ENCODE measurements at regions of chr1 and their contacts with region 1.

Region 1: DNA sequence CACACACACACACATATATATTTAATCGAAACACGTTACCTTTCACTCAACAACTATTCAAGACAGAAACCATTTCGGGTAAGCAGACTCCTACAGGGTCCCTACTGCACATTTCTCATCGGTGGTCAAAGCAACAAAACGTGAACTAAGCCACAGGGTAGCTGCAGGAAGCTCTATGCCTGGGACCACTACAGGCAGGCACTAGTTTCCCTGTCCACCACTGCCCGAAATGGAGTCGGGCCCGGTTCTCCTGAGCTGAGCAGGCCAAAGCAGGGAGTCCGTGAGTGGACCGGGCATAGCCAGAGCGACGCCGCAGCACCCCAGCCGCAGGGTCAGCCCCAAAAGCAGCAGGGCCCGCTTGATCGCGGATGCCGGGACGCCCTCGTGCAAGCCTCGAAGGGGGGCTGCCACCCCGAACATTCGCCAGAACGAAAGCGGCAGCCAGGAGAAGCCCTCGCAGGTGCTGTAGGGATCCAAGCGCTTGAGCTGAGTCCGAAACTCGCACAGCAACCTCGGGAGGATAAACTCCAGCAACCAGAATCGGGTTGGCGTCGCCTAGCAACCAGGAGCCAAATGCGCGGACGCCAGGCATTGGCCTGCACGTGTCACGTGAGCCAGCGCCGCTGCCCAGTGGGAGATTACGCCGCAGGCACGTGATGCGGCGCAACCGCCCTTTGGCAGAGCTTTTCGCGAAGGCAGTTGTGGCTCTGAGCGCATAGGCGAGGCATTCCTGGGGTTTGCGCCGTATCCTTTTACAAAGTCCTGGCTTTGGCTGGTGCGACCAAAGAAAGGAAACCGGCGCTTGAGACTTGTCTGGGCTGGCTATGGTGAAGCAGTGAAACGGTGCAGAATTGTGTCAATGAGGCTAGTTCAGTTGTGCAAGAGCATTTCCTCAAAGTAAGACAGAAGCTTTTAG is 13.9 kb upstream of the DDI2 start:
- DNase-seq: peak; percentile 85 to 98 (median 90)
- ATAC-seq: peak; percentile 98
- H3K4me3 ChIP-seq: peak overlapping the region; percentile 95
- H3K4me3 Mint-ChIP-seq: peak overlapping the region; percentile 65
- H3K27ac ChIP-seq: peak overlapping the region; percentile 47 to 49
- H3K27ac Mint-ChIP-seq: peak overlapping the region; percentile 80
- H3K4me1 ChIP-seq: peaks cover 15% of the 10 kb centered on the region
- H3K4me1 Mint-ChIP-seq: peaks cover 13% of the 10 kb centered on the region
- H3K27me3 ChIP-seq: no peaks in the 10 kb centered on the region
- H3K27me3 Mint-ChIP-seq: no peaks in the 10 kb centered on the region
- CTCF ChIP-seq: no peak

Region 2: GRCh38 chr1:15283526-15283925 is 319.8 kb before region 1 on chr1:
- CTCF ChIA-PET with region 1: no interaction called
- POLR2A ChIA-PET with region 1: no interaction called
- intact Hi-C with region 1: no loop called
- DNase-seq: no peak
- ATAC-seq: no peak
- H3K4me3 ChIP-seq: no peak overlapping the region
- H3K4me3 Mint-ChIP-seq: no peak overlapping the region
- H3K27ac ChIP-seq: no peak overlapping the region
- H3K27ac Mint-ChIP-seq: no peak overlapping the region
- H3K4me1 ChIP-seq: no peaks in the 10 kb centered on the region
- H3K4me1 Mint-ChIP-seq: no peaks in the 10 kb centered on the region
- H3K27me3 ChIP-seq: peaks cover 0 to 3% of the 10 kb centered on the region in 2 experiments
- H3K27me3 Mint-ChIP-seq: peaks cover 7% of the 10 kb centered on the region
- CTCF ChIP-seq: no peak

Region 3: DNA sequence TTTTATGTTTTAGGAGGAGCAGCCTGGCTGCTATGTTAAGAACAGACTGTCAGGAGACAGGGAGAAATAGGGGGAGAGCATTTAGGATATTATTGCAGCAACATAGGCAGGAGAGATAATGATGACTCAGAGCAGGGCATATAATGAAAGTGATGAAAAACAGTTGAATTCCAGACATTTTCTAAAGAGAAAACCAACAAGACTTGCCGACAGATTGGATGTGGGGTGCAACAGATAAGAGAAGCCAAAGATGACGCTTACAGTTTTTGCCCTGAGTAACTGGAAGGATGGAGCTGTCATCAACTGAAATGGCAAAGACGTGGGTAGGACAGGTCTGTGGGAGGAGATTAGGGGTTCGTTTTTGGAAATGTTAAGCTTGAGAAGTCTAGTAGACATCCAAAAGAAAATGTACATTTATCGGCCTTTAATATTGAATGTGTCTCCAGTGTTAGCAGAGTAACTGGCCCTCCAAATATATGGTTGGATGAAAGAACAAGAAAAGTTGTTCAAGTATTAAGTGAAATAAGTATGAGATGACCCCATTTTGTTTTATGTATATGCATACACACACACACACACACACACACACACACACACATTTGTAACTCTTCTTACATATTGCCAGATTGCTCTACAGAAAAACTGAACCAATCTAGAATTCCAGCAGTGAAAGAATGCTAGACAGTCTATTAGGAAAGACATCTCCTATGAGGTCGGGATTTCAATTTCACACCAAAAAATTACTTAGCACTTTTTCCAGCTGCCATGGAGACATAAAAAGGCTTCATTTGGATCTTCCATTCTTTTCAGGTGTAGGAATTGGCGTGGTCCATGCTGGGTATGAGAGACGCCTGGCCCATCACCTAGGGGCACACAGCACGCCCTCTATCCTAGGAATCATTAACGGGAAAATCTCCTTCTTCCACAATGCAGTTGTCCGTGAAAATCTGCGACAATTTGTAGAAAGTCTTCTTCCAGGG is 59.4 kb before region 1 on chr1:
- CTCF ChIA-PET with region 1: no interaction called
- POLR2A ChIA-PET with region 1: no interaction called
- intact Hi-C with region 1: no loop called
- DNase-seq: no peak
- ATAC-seq: no peak
- H3K4me3 ChIP-seq: no peak overlapping the region
- H3K4me3 Mint-ChIP-seq: no peak overlapping the region
- H3K27ac ChIP-seq: no peak overlapping the region
- H3K27ac Mint-ChIP-seq: peak overlapping the region; percentile 28
- H3K4me1 ChIP-seq: no peaks in the 10 kb centered on the region
- H3K4me1 Mint-ChIP-seq: peaks cover under 1% of the 10 kb centered on the region
- H3K27me3 ChIP-seq: no peaks in the 10 kb centered on the region
- H3K27me3 Mint-ChIP-seq: no peaks in the 10 kb centered on the region
- CTCF ChIP-seq: no peak

Region 4: DNA sequence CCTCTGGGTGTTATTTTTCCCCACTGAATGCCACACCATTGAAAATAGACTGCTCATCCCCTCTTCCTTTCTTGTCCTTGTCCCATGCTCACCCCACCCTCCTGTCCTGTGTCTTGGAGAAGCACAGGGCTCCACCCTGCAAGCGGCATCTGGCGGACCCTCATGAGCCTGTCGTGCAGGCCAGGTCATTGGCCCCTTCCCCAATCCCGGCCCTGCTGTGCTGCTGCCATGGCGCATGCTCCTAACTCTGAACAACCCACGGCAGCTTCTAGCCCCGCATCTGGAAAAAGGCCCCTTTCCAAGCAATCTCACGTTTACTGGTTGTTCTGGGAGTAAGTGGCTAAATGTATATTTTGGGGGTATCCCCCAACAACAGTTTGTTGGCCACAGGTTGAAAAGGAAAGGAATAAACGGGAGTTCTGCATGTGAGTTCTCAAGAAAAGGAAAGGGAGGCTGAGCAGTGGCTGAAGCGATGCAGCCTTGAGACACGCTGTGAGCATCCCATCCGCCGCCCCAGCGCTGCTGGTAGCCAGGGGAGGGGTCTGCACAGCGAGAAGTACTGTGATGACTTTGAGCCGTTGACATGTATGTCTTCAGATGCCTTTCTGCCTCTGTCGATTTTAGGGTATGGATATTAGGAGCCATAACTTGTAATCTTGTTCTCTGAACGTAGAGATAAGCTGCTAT is 34.8 kb before region 1 on chr1:
- CTCF ChIA-PET with region 1: no interaction called
- POLR2A ChIA-PET with region 1: no interaction called
- intact Hi-C with region 1: no loop called
- DNase-seq: no peak
- ATAC-seq: no peak
- H3K4me3 ChIP-seq: no peak overlapping the region
- H3K4me3 Mint-ChIP-seq: no peak overlapping the region
- H3K27ac ChIP-seq: no peak overlapping the region
- H3K27ac Mint-ChIP-seq: peak overlapping the region; percentile 17
- H3K4me1 ChIP-seq: no peaks in the 10 kb centered on the region
- H3K4me1 Mint-ChIP-seq: peaks cover 11% of the 10 kb centered on the region
- H3K27me3 ChIP-seq: no peaks in the 10 kb centered on the region
- H3K27me3 Mint-ChIP-seq: no peaks in the 10 kb centered on the region
- CTCF ChIP-seq: no peak

Region 5: DNA sequence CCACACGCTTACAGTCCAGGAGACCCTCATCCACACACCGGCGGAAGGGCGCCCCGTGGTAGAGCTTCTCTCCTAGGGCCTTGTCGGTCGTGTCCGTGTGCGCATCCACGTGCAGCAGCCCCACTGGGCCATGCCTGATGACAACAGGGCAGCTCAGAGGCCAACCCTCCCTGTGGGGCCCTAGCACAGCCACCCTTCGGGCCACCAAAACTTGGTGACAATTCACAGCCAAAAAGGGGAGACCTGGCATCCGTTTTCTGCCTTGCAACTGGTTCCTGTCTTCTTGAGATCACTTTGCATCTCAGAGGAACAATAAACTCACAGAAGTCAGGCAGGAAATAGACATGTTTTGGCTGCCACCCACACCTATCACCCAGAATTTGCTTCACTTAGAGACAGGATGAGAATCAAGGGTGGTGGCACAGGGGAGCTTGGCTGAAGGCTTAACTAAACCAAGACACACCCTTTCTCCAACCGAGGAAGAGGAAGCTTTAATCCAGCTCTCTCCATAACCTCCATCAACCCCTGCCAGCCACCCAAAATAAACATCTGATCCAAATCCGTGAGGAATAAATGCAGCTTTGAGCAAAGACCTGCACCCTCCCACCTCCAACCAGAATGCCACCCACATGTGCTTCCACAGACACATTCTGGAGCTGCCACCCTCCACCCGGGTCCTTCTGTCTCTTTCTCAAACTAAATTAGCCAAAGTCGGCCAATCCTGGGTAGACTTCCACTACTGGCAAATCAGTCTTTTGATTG is 24.2 kb before region 1 on chr1:
- CTCF ChIA-PET with region 1: interaction called, 5 read pairs
- POLR2A ChIA-PET with region 1: interaction called, 34 read pairs
- intact Hi-C with region 1: no loop called
- DNase-seq: peak in 13 of 14 experiments; percentile 13 to 81 (median 48)
- ATAC-seq: peak; percentile 92
- H3K4me3 ChIP-seq: no peak overlapping the region
- H3K4me3 Mint-ChIP-seq: peak overlapping the region; percentile 67
- H3K27ac ChIP-seq: peak overlapping the region; percentile 64
- H3K27ac Mint-ChIP-seq: peak overlapping the region; percentile 97
- H3K4me1 ChIP-seq: peaks cover 58% of the 10 kb centered on the region
- H3K4me1 Mint-ChIP-seq: peaks cover 55% of the 10 kb centered on the region
- H3K27me3 ChIP-seq: no peaks in the 10 kb centered on the region
- H3K27me3 Mint-ChIP-seq: no peaks in the 10 kb centered on the region
- CTCF ChIP-seq: no peak

Region 6: DNA sequence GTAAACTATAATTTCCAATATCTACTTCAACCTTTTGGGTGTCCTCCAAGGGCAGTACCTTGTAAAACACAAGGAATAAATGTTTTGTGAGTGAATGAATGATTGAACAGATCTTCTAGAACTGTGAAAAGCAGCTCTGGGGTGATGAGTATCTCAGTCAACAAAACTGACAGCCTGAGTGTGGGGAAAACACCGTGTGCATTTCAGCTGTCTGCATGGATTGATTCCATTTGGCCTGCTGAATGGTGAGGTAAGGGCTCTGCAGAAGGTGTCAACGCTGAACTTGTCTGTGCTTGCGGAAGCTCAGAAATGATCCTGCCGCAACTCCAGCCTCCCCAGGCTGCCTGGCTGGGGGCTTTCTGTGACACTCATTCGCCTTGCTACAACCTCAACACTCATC is 11.0 kb before region 1 on chr1:
- CTCF ChIA-PET with region 1: no interaction called
- POLR2A ChIA-PET with region 1: interaction called, 12 read pairs
- intact Hi-C with region 1: no loop called
- DNase-seq: no peak
- ATAC-seq: no peak
- H3K4me3 ChIP-seq: no peak overlapping the region
- H3K4me3 Mint-ChIP-seq: no peak overlapping the region
- H3K27ac ChIP-seq: no peak overlapping the region
- H3K27ac Mint-ChIP-seq: no peak overlapping the region
- H3K4me1 ChIP-seq: no peaks in the 10 kb centered on the region
- H3K4me1 Mint-ChIP-seq: peaks cover 2% of the 10 kb centered on the region
- H3K27me3 ChIP-seq: no peaks in the 10 kb centered on the region
- H3K27me3 Mint-ChIP-seq: no peaks in the 10 kb centered on the region
- CTCF ChIP-seq: no peak

Region 7: GRCh38 chr1:15760520-15761211 is 157.4 kb after region 1 on chr1:
- CTCF ChIA-PET with region 1: no interaction called
- POLR2A ChIA-PET with region 1: no interaction called
- intact Hi-C with region 1: no loop called
- DNase-seq: no peak
- ATAC-seq: no peak
- H3K4me3 ChIP-seq: no peak overlapping the region
- H3K4me3 Mint-ChIP-seq: no peak overlapping the region
- H3K27ac ChIP-seq: no peak overlapping the region
- H3K27ac Mint-ChIP-seq: no peak overlapping the region
- H3K4me1 ChIP-seq: peaks cover 21% of the 10 kb centered on the region
- H3K4me1 Mint-ChIP-seq: peaks cover 15% of the 10 kb centered on the region
- H3K27me3 ChIP-seq: peaks cover 24 to 43% of the 10 kb centered on the region in 2 experiments
- H3K27me3 Mint-ChIP-seq: peaks cover 62% of the 10 kb centered on the region
- CTCF ChIP-seq: no peak

Measured in CD4-positive, alpha-beta T cell (primary cell).